ENCODE measurements at regions of chr12 and their contacts with region 1.

Region 1: GRCh38 chr12:27003421-27004381 is 10.5 kb downstream of the TM7SF3 start:
- DNase-seq: no peak
- ATAC-seq: no peak
- H3K4me3 ChIP-seq: no peak overlapping the region
- H3K27ac ChIP-seq: no peak overlapping the region
- H3K4me1 ChIP-seq: no peaks in the 10 kb centered on the region
- H3K27me3 ChIP-seq: no peaks in the 10 kb centered on the region
- CTCF ChIP-seq: no peak
- POLR2A ChIP-seq: no peak
- RAD21 ChIP-seq: no peak

Region 2: GRCh38 chr12:26963413-26963812 is 40.3 kb before region 1 on chr12:
- CTCF ChIA-PET with region 1: no interaction called
- POLR2A ChIA-PET with region 1: no interaction called
- dilution Hi-C with region 1: no loop called
- in situ Hi-C with region 1: no loop called
- intact Hi-C with region 1: loop called (anchors 5 kb)
- DNase-seq: peak; percentile 16
- ATAC-seq: no peak
- H3K4me3 ChIP-seq: no peak overlapping the region
- H3K27ac ChIP-seq: no peak overlapping the region
- H3K4me1 ChIP-seq: no peaks in the 10 kb centered on the region
- H3K27me3 ChIP-seq: no peaks in the 10 kb centered on the region
- CTCF ChIP-seq: no peak
- POLR2A ChIP-seq: no peak
- RAD21 ChIP-seq: no peak

Region 3: GRCh38 chr12:26987634-26988424 is 15.9 kb before region 1 on chr12:
- CTCF ChIA-PET with region 1: no interaction called
- POLR2A ChIA-PET with region 1: interaction called, 13 read pairs
- dilution Hi-C with region 1: no loop called
- in situ Hi-C with region 1: no loop called
- intact Hi-C with region 1: no loop called
- DNase-seq: peak; percentile 17
- ATAC-seq: peak; percentile 21; the same call in 1 of the 2 replicates
- H3K4me3 ChIP-seq: no peak overlapping the region
- H3K27ac ChIP-seq: no peak overlapping the region
- H3K4me1 ChIP-seq: no peaks in the 10 kb centered on the region
- H3K27me3 ChIP-seq: no peaks in the 10 kb centered on the region
- CTCF ChIP-seq: no peak
- POLR2A ChIP-seq: no peak
- RAD21 ChIP-seq: no peak